Naive thymus-derived CD4-positive, alpha-beta T cell (primary cell): ENCODE measurements at regions of chr1 and their contacts with region 1.

Region 1: GRCh38 chr1:212791676-212792395 is at the starts of genes NSL1 and TATDN3:
- DNase-seq: peak; percentile 82 to 99 (median 92)
- ATAC-seq: peak; percentile 98
- H3K4me3 ChIP-seq: peak within 1 kb of the TSS; percentile 100
- H3K4me3 Mint-ChIP-seq: peak within 1 kb of the TSS; percentile 86 to 98 (median 95)
- H3K27ac ChIP-seq: peak within 1 kb of the TSS; percentile 83
- H3K27ac Mint-ChIP-seq: peak within 1 kb of the TSS; percentile 87 to 99 (median 96)
- H3K4me1 ChIP-seq: peaks cover 17 to 19% of the 10 kb centered on the region in 2 donors
- H3K4me1 Mint-ChIP-seq: peaks cover 27 to 58% (median 43%) of the 10 kb centered on the region in 7 donors
- H3K27me3 ChIP-seq: no peaks in the 10 kb centered on the region
- H3K27me3 Mint-ChIP-seq: no peaks in the 10 kb centered on the region
- total RNA-seq, gene NSL1: 22.3 to 42.3 (median 37.7) TPM
- total RNA-seq, gene TATDN3: 10.0 to 17.7 (median 13.9) TPM

Region 2: DNA sequence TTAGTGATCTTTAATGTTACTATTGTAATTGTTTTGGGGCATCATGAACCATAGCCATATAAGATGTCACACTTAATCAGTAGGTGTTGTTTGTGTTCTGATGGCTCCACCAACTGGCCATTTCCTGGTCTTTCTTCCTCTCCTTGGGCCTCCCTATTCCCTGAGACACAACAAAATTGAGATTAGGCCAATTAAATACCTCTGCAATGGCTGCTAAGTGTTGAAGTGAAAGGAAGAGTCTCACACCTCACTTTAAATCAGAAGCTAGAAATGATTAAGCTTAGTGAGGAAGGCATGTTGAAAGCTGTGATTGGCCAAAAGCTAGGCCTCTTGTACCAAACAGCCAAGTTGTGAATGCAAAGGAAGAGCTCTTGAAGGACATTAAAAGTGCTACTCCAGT is 475.9 kb before region 1 on chr1:
- CTCF ChIA-PET with region 1: no interaction called
- POLR2A ChIA-PET with region 1: no interaction called
- intact Hi-C with region 1: no loop called
- DNase-seq: no peak
- ATAC-seq: no peak
- H3K4me3 ChIP-seq: no peak overlapping the region
- H3K4me3 Mint-ChIP-seq: peak overlapping the region in 6 of 10 donors; percentile 6 to 57 (median 37)
- H3K27ac ChIP-seq: no peak overlapping the region
- H3K27ac Mint-ChIP-seq: peak overlapping the region in 7 of 9 donors; percentile 19 to 79 (median 39)
- H3K4me1 ChIP-seq: peaks cover 0 to 6% of the 10 kb centered on the region in 2 donors
- H3K4me1 Mint-ChIP-seq: peaks cover 19 to 59% (median 47%) of the 10 kb centered on the region in 7 donors
- H3K27me3 ChIP-seq: no peaks in the 10 kb centered on the region
- H3K27me3 Mint-ChIP-seq: no peaks in the 10 kb centered on the region

Region 3: DNA sequence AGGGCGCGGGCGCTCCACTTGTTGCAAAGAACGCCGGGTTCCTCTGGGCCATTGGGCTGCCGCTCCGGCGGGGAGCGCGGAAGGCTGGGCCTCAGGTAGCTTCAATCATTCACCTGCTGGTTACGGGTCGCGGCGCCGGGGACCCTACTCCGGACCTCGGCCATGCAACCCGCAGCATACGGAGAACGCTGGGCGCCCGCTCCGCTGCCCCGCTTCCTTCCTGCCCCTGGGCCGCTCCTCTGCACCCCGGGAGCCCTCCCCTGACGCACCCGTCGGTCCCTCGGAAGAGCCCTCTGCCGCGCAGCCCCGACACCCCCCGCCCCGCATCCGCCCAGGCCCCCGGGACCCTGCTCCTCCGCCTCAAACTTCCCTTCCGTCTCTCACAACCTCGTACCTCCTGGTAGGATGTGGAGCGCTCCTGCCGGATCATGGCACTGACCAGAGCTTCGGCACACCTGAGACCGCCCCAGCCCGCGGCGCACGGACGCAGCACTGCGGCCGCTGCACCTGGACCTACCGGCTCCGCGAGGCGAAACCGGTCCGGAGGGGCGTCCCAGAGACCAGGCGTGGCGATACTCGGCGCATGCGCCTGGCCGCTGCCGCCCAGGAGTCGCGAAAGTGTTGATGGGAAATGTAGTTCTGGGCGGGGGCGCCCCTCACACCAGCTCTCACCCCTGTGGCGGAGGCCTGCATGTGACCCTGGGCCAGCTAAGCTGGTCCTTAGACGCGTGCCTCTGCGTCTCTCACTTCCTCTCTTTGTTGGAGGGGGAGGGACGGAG is 377.3 kb before region 1 on chr1 and contains the start of gene PACC1:
- CTCF ChIA-PET with region 1: no interaction called
- POLR2A ChIA-PET with region 1: no interaction called
- intact Hi-C with region 1: loop called in 1 of 2 experiments (anchors 2 kb)
- DNase-seq: peak; percentile 77 to 89 (median 86)
- ATAC-seq: peak; percentile 98
- H3K4me3 ChIP-seq: peak within 1 kb of the TSS; percentile 98
- H3K4me3 Mint-ChIP-seq: peak within 1 kb of the TSS; percentile 87 to 100 (median 94)
- H3K27ac ChIP-seq: peak within 1 kb of the TSS; percentile 71
- H3K27ac Mint-ChIP-seq: peak within 1 kb of the TSS; percentile 74 to 94 (median 89)
- H3K4me1 ChIP-seq: peaks cover 15 to 19% of the 10 kb centered on the region in 2 donors
- H3K4me1 Mint-ChIP-seq: peaks cover 22 to 46% (median 40%) of the 10 kb centered on the region in 7 donors
- H3K27me3 ChIP-seq: no peaks in the 10 kb centered on the region
- H3K27me3 Mint-ChIP-seq: no peaks in the 10 kb centered on the region
- total RNA-seq, gene PACC1: 7.9 to 13.4 (median 12.0) TPM

Region 4: DNA sequence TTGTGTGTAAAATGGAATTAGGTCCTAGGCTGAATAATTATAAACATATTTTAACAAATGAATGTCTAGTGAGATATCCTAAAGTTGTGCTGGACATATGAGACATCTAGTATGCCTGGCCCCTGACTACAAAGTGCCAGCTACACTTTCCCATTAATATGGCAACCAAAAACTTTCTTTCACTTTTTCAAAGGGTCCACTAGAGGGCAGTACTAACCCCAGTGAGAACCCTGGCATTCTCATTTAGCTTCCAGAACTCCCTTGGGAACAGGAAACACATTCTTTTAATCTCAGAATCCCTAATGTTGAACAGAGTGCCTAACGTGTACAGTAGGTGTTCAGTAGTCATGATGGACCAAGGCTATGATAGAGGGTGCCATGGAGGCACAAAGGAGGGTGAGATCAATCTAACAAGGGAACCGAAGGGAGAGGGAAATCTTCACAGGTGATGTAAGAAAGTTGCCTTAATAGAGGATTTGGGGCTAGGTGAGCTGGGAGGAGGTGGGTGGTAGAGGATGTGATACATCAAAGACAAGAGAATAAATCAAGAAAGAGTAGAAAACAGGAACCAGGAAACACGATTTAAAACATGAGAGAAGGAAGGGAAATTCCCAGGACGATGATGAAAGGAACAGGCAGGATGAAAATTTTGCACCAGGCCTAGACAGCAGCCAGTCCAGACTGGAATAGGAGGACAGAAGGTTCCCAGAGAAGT is 41.9 kb before region 1 on chr1:
- CTCF ChIA-PET with region 1: no interaction called
- POLR2A ChIA-PET with region 1: interaction called, 5 read pairs
- intact Hi-C with region 1: loop called in 1 of 2 experiments (anchors 2 kb)
- DNase-seq: peak in 6 of 9 donors; percentile 3 to 30 (median 14)
- ATAC-seq: peak; percentile 58
- H3K4me3 ChIP-seq: no peak overlapping the region
- H3K4me3 Mint-ChIP-seq: peak overlapping the region; percentile 1 to 69 (median 48)
- H3K27ac ChIP-seq: peak overlapping the region; percentile 56
- H3K27ac Mint-ChIP-seq: peak overlapping the region; percentile 1 to 92 (median 88)
- H3K4me1 ChIP-seq: peaks cover 5 to 36% of the 10 kb centered on the region in 2 donors
- H3K4me1 Mint-ChIP-seq: peaks cover 36 to 73% (median 62%) of the 10 kb centered on the region in 7 donors
- H3K27me3 ChIP-seq: no peaks in the 10 kb centered on the region
- H3K27me3 Mint-ChIP-seq: no peaks in the 10 kb centered on the region

Region 5: GRCh38 chr1:212857992-212858460 is 66.2 kb after region 1 on chr1 and contains the start of gene FLVCR1:
- CTCF ChIA-PET with region 1: no interaction called
- POLR2A ChIA-PET with region 1: no interaction called
- intact Hi-C with region 1: loop called (anchors 1 kb)
- DNase-seq: peak; percentile 74 to 96 (median 80)
- ATAC-seq: peak; percentile 99
- H3K4me3 ChIP-seq: peak within 1 kb of the TSS; percentile 72
- H3K4me3 Mint-ChIP-seq: peak within 1 kb of the TSS in 6 of 10 donors; percentile 95 to 97 (median 96)
- H3K27ac ChIP-seq: peak within 1 kb of the TSS; percentile 68
- H3K27ac Mint-ChIP-seq: peak within 1 kb of the TSS; percentile 77 to 96 (median 89)
- H3K4me1 ChIP-seq: peaks cover 9 to 16% of the 10 kb centered on the region in 2 donors
- H3K4me1 Mint-ChIP-seq: peaks cover 9 to 34% (median 21%) of the 10 kb centered on the region in 7 donors
- H3K27me3 ChIP-seq: no peaks in the 10 kb centered on the region
- H3K27me3 Mint-ChIP-seq: no peaks in the 10 kb centered on the region
- total RNA-seq, gene FLVCR1: 7.4 to 12.2 (median 8.2) TPM

Region 6: DNA sequence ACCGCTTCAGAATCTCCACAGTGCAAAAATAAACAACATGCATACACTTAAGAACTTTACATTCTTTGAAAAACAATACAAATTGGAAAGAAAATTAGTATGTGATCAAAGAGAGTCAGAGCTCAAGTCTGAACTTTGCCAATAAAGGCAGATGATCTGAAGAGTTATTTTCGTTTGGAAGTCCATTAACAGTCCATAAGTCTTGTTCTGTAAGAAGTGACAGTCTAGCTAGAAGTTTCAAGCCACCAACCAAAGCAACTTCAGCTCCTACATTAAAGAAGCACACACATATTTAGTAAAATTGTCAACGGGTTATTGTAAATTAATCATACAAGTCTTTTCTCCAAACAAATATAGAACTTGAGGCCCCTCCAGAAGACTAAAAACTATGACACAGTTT is 203.1 kb after region 1 on chr1:
- CTCF ChIA-PET with region 1: interaction called, 3 read pairs
- POLR2A ChIA-PET with region 1: no interaction called
- intact Hi-C with region 1: loop called in 1 of 2 experiments (anchors 2 kb)
- DNase-seq: no peak
- ATAC-seq: no peak
- H3K4me3 ChIP-seq: no peak overlapping the region
- H3K4me3 Mint-ChIP-seq: no peak overlapping the region
- H3K27ac ChIP-seq: no peak overlapping the region
- H3K27ac Mint-ChIP-seq: no peak overlapping the region
- H3K4me1 ChIP-seq: no peaks in the 10 kb centered on the region
- H3K4me1 Mint-ChIP-seq: peaks cover 0 to 12% (median 7%) of the 10 kb centered on the region in 7 donors
- H3K27me3 ChIP-seq: no peaks in the 10 kb centered on the region
- H3K27me3 Mint-ChIP-seq: no peaks in the 10 kb centered on the region

Region 7: DNA sequence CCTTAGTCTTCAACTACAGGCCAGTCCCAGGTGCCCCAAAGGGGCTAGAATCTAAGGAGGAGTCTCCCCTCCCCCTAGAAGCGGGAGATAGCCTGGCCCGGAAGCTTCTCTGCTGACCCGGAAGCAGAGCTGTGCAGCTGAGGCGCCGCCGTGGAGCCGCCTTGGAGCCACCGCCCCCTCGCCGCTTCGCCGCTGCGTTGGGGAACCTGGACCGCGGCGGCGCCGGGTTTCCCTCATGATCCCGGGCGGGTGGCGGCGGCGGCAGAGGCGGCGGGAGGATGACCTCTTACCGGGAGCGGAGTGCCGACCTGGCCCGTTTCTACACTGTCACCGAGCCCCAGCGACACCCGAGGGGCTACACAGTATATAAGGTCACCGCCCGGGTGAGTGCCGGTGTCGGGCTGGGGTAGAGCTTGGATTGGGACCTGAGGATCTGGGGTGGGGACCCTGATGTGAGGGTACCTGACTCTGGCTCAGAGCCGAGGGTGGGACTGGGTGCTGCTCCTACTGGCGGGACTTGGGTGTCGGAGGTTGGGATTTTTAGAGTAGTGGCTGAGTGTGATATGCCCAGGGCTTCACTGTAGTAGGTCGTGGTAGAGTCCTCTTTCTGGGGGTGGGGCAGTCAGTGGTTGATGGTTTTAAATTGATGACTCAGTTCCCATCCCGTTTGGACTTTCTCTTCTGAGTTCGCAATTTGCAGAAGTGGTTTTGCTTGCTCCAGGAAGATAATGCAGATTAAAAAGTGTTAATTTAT is 259.5 kb after region 1 on chr1 and contains the start of gene RPS6KC1:
- CTCF ChIA-PET with region 1: no interaction called
- POLR2A ChIA-PET with region 1: no interaction called
- intact Hi-C with region 1: loop called (anchors 1 kb)
- DNase-seq: peak; percentile 64 to 82 (median 79)
- ATAC-seq: peak; percentile 97
- H3K4me3 ChIP-seq: peak within 1 kb of the TSS; percentile 97
- H3K4me3 Mint-ChIP-seq: peak within 1 kb of the TSS; percentile 93 to 99 (median 96)
- H3K27ac ChIP-seq: peak within 1 kb of the TSS; percentile 72
- H3K27ac Mint-ChIP-seq: peak within 1 kb of the TSS; percentile 75 to 98 (median 93)
- H3K4me1 ChIP-seq: peaks cover 0 to 13% of the 10 kb centered on the region in 2 donors
- H3K4me1 Mint-ChIP-seq: peaks cover 23 to 39% (median 35%) of the 10 kb centered on the region in 7 donors
- H3K27me3 ChIP-seq: peaks cover 0 to 4% of the 10 kb centered on the region in 2 donors
- H3K27me3 Mint-ChIP-seq: peaks cover 9 to 27% (median 23%) of the 10 kb centered on the region in 5 donors
- total RNA-seq, gene RPS6KC1: 9.1 to 18.9 (median 14.3) TPM